Activated CD4-positive, alpha-beta memory T cell treated with anti-CD3 and anti-CD28 coated beads for 36 hours (primary cell): ENCODE measurements at regions of chr5 and their contacts with region 1.

Region 1: GRCh38 chr5:41524174-41524573 is 13.8 kb upstream of the PLCXD3 start:
- DNase-seq: no peak
- H3K4me3 Mint-ChIP-seq: no peak overlapping the region
- H3K27ac Mint-ChIP-seq: no peak overlapping the region
- H3K4me1 Mint-ChIP-seq: no peaks in the 10 kb centered on the region
- H3K27me3 Mint-ChIP-seq: no peaks in the 10 kb centered on the region

Region 2: GRCh38 chr5:40904205-40904993 is 619.8 kb before region 1 on chr5:
- CTCF ChIA-PET with region 1: no interaction called
- POLR2A ChIA-PET with region 1: no interaction called
- intact Hi-C with region 1: loop called (anchors 10 kb)
- DNase-seq: peak; percentile 56
- H3K4me3 Mint-ChIP-seq: no peak overlapping the region
- H3K27ac Mint-ChIP-seq: no peak overlapping the region
- H3K4me1 Mint-ChIP-seq: no peaks in the 10 kb centered on the region
- H3K27me3 Mint-ChIP-seq: peaks cover 1% of the 10 kb centered on the region